BJ (cell line): ENCODE measurements at regions of chr7 and their contacts with region 1.

Region 1: DNA sequence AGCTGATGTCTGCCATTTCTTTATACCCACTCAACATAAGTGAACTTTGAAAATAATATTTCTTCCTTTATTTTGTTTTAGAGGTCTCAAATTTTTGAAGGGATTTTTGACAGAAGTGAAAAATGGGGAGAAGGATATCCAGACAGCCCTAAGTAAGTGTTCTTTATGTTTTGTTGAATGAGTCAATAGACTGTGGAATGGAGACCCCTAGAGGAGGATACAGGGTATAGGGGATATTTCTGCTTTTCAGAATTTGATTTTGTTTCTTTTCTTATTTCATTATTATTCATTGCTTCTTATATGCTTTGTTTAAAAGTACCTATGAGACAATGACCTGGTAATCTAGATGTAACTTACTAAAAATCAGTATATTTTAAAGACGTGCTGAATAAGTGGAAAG is 34.4 kb downstream of the PLEKHA8 start:
- DNase-seq: no peak
- H3K4me3 ChIP-seq: no peak overlapping the region
- H3K27me3 ChIP-seq: no peaks in the 10 kb centered on the region
- CTCF ChIP-seq: peak; percentile 66

Region 2: DNA sequence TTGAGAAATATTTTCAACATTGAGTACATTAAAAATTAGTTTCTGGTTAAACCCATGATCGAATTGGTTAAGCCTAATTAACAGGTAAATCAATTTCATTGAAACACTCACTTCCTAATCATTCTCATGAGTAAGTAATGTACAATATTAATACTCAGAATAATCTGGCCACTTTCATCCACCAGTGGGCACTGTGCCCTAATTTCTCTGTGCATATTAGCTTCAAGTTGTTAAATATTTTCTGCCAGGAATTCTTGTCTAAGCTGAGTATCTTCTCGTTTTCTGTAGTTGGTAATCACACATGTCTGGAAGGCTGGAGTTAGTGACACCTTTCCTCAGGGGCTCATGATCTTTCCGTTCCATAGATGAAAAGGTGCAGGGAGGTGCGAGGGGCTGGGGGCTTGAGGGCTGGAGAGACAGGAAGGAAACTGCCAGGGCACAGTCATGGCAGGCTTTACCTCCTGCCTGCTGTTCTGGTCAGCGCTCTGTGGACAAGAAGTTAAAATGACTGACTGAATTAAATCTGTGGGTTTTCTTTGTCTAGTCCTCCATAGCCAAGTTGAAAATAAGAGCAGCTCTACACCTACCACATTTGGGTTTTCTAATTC is 184.4 kb before region 1 on chr7:
- CTCF ChIA-PET with region 1: interaction called, 29 read pairs
- POLR2A ChIA-PET with region 1: no interaction called
- DNase-seq: no peak
- H3K4me3 ChIP-seq: no peak overlapping the region
- H3K27me3 ChIP-seq: 0 out of 2 replicates have a peak, but pooled peaks cover 4% of the 10 kb centered on the region
- CTCF ChIP-seq: peak; percentile 59

Region 3: GRCh38 chr7:29935111-29935510 is 127.5 kb before region 1 on chr7:
- CTCF ChIA-PET with region 1: interaction called, 17 read pairs
- POLR2A ChIA-PET with region 1: no interaction called
- DNase-seq: no peak
- H3K4me3 ChIP-seq: no peak overlapping the region
- H3K27me3 ChIP-seq: no peaks in the 10 kb centered on the region
- CTCF ChIP-seq: no peak

Region 4: DNA sequence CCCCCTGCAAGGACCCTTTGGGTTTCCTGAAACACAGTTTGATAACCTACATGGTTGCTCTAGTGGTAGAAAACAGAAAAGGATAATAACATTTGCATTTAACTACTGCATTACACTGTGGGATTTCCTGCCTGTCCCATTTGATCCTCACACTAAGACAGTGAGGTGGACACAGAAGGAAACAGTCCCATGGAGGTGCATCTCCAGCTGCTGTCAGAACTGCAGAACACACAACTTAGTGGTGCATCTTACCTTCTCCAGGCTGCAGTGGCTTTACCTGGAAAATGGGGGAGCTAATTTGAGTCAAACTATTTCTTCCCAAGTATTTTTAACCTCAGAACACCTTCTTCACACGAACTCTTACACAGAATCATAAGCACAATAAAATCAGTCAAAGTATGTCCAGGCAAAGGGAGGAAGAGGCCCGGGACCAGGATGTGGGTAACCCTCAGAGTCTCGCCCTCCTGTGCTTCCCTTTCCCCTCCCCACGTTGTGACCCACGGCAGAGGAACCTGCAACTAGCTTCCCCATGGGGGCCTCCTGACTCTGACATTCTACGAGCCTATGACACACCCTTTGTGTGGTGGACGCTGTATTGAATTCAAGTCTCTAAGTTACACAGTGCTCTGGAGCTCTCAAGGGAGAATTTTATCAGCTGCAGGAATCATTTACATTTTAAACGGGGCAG is 106.6 kb before region 1 on chr7:
- CTCF ChIA-PET with region 1: interaction called, 11 read pairs
- POLR2A ChIA-PET with region 1: no interaction called
- DNase-seq: no peak
- H3K4me3 ChIP-seq: no peak overlapping the region
- H3K27me3 ChIP-seq: no peaks in the 10 kb centered on the region
- CTCF ChIP-seq: no peak

Region 5: DNA sequence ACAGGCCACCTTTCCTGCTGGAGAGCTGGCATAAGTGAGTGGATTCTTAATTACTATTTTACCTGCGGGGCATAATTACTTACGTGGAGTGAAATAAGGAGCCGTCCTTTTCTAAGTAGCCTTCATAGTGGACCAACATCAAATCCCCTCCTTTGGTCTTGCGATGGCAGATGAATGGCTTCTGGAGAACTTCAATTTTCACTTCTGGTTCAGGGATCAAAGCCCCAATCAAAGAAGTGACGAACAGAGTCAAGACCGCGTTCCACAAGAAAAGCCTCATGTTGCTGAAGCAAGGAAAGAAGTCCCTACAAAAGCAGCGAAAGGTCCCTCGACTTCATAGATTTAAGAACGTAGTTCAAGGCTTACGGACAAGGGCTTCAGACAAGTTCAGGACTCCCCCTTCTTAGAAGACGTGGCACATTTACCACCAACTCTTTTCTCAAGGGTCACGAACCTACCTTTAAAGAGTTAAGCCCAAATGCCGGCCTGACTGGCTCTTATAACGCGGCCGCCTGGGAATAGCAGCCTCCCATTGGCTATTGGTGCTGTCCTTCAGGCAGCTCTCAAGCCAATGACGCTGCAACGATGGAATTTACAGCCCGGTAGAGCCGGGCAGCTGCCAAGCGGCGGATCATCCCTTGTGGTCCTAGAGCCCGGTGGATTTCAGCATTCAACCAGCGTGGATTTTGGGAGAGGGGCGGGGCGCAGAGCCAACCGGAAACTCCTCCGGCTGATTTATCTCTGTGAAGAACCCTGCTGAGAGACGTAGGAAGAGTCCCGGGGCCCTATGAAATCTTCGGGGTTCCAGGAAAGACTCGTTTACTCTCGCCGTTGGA is 36.1 kb before region 1 on chr7 and contains the start of gene FKBP14:
- CTCF ChIA-PET with region 1: interaction called, 12 read pairs
- POLR2A ChIA-PET with region 1: no interaction called
- DNase-seq: peak; percentile 95
- H3K4me3 ChIP-seq: peak within 1 kb of the TSS; percentile 79
- H3K27me3 ChIP-seq: no peaks in the 10 kb centered on the region
- CTCF ChIP-seq: no peak
- polyA plus RNA-seq, gene FKBP14: 14.9 and 27.1 TPM in 2 replicates

Region 6: DNA sequence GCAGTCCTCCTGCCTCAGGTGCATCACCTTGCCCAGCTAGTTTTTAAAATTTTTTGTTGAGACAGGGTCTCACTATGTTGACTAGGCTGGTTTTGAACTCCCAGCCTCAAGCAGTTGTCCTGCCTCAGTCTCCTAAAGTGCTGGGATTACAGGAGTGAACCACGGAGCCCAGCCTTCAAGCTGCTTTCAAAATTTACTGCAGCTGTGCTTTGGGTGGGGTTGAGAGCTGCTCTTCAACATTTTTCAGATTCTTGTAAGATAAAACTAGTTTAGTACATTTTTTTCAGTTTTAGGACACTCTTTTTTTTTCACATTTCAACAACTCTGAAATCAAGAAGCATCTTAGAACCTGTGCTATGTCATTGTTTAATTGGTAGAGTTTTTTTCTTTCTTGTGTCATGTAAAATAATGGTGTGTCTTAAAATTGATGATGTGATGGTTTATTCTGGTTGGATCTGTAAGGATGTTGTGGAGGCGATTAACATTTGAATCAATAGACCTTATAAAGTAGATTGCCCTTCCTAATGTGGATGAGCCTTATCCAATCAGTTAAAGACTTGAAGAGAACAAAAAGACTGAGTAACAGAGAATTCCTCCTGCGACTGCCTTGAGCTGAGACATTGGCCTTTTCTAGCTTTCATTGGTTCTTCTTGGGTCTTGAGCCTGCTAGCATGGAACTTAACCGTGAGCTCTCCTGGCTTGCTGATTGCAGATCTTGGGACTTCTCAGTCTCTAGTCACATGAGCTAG is 20.9 kb before region 1 on chr7:
- CTCF ChIA-PET with region 1: interaction called, 11 read pairs
- POLR2A ChIA-PET with region 1: no interaction called
- DNase-seq: no peak
- H3K4me3 ChIP-seq: no peak overlapping the region
- H3K27me3 ChIP-seq: no peaks in the 10 kb centered on the region
- CTCF ChIP-seq: no peak

Region 7: GRCh38 chr7:30047124-30047523 is 15.5 kb before region 1 on chr7:
- CTCF ChIA-PET with region 1: interaction called, 15 read pairs
- POLR2A ChIA-PET with region 1: no interaction called
- DNase-seq: no peak
- H3K4me3 ChIP-seq: no peak overlapping the region
- H3K27me3 ChIP-seq: no peaks in the 10 kb centered on the region
- CTCF ChIP-seq: no peak